AG04449 (cell line): ENCODE measurements at regions of chrX and their contacts with region 1.

Region 1: DNA sequence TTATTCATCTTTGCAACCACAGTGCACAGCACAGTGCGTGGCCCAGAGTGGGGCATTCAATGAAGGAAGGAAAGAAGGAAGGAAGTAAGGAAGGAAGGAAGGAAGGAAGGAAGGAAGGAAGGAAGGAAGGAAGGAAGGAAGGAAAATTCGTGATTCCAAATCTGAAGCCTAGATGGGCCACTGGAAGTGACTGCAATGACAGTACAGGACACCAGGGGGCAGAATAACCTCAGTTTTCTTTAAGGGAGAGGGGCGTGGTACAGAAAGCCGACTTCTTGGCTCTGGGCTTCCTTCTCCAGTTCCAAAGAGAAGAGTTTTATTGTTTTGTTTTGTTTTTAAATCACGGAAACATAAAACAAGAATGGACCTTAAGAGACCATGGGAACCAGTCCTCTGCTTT is 47.8 kb downstream of the APLN start:
- DNase-seq: no peak
- H3K4me3 ChIP-seq: no peak overlapping the region
- CTCF ChIP-seq: peak; percentile 47

Region 2: DNA sequence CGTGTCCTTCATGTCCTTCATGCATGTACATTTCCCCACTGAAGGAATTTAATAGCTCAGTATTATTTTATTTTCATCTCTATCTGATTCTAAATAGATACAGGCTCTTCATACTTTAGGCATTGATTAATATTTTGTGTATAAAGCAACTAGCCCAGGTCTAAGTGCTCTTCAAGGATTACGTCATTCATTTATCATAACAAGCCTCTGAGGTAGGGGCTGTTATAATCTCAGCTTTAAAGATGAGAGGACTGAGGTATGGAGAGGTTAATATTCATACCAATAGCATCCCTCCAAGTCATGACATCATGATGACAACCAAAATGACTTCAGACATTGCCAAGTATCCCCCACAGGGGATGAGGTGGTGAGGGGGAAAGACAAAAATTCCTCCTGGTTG is 395.6 kb before region 1 on chrX:
- CTCF ChIA-PET with region 1: no interaction called
- POLR2A ChIA-PET with region 1: no interaction called
- DNase-seq: no peak
- H3K4me3 ChIP-seq: no peak overlapping the region
- CTCF ChIP-seq: no peak

Region 3: DNA sequence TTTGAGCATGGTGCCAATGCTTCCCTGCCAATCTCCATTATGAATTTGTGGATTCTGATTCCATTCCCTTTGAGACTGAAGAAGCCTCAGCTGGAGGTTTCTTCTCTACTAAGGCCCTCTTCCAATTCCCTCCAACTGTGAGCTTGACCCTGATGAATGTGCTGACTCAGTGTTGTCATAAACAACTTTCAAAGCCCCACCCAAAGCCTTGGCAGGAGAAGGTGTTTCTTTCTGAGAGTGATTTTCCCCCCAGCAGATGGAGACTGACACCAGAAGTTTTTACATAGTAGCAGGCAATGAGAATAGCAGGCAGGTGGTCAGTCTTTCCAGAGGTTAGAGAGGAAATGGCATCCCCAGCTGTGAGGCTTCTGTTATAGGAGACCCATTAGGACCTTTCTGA is 13.8 kb before region 1 on chrX:
- CTCF ChIA-PET with region 1: interaction called, 11 read pairs
- POLR2A ChIA-PET with region 1: no interaction called
- DNase-seq: no peak
- H3K4me3 ChIP-seq: no peak overlapping the region
- CTCF ChIP-seq: no peak

Region 4: GRCh38 chrX:129622757-129623341 is 15.9 kb after region 1 on chrX:
- CTCF ChIA-PET with region 1: interaction called, 17 read pairs
- POLR2A ChIA-PET with region 1: no interaction called
- DNase-seq: no peak
- H3K4me3 ChIP-seq: no peak overlapping the region
- CTCF ChIP-seq: no peak

Region 5: GRCh38 chrX:129637217-129638109 is 30.5 kb after region 1 on chrX:
- CTCF ChIA-PET with region 1: interaction called, 13 read pairs
- POLR2A ChIA-PET with region 1: no interaction called
- DNase-seq: no peak
- H3K4me3 ChIP-seq: no peak overlapping the region
- CTCF ChIP-seq: peak; percentile 72

Region 6: GRCh38 chrX:129737916-129738315 is 131.0 kb after region 1 on chrX:
- CTCF ChIA-PET with region 1: interaction called, 13 read pairs
- POLR2A ChIA-PET with region 1: no interaction called
- DNase-seq: no peak
- H3K4me3 ChIP-seq: no peak overlapping the region
- CTCF ChIP-seq: no peak

Region 7: GRCh38 chrX:129823115-129823514 is 216.2 kb after region 1 on chrX:
- CTCF ChIA-PET with region 1: interaction called, 10 read pairs
- POLR2A ChIA-PET with region 1: no interaction called
- DNase-seq: no peak
- H3K4me3 ChIP-seq: no peak overlapping the region
- CTCF ChIP-seq: peak; percentile 23

Region 8: DNA sequence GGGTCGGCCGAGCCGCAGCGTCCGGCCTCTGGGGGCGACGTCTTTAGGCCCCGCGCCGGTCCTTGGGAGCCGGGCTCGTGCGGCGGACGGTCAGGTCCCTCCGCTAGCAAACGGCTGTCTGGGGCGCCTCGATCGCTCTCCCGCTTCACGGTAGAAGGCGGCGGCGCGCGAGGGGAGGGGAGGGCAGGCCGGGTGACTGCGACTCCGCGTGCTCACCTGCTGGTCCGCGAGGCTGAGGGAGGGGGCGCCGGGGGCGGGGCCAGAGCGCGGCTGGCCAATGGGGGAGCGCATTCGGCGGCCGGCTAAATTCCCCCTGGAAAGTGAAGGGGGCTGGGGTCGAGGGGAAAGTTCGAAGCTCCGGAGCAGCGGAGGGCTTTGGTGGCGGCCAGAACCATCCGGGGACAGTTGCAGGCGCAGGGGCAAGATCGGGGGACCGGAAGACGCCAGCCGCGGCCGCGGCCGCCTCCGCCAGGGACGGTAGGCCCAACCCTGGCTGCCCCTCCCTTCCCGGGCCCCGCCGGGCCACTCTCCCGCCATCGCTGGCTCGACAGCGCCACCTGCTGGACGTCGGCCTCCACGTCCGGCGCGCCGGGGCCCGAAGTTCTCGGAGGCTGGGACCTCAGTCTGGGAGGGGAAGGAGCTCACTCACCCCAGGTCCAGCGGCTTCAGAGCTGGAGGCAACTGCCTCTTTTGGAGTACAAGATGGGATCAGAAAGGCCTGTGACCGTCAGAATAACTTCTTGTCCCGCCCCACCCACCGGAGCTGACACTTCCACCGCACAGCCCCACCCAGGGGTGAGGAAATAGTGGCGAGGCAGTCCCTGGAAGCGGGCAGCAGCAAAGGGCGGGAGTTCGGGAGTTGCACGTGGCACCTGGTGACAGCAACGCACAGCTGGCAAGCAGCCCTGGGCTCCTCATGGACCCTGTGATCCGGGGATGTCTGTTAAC is 453.5 kb after region 1 on chrX:
- CTCF ChIA-PET with region 1: interaction called, 24 read pairs
- POLR2A ChIA-PET with region 1: no interaction called
- DNase-seq: no peak
- H3K4me3 ChIP-seq: peak overlapping the region; percentile 59
- CTCF ChIP-seq: peak; percentile 84